Panc1 (cell line): ENCODE measurements at regions of chr17 and their contacts with region 1.

Region 1: GRCh38 chr17:50626037-50626574 is 8.6 kb upstream of the ABCC3 start:
- DNase-seq: no peak
- ATAC-seq: peak; percentile 82
- H3K4me3 ChIP-seq: no peak overlapping the region
- H3K27ac ChIP-seq: peak overlapping the region; percentile 55
- H3K4me1 ChIP-seq: peaks cover 66% of the 10 kb centered on the region
- H3K27me3 ChIP-seq: no peaks in the 10 kb centered on the region
- CTCF ChIP-seq: peak; percentile 92

Region 2: GRCh38 chr17:50535407-50535806 is 90.7 kb before region 1 on chr17:
- CTCF ChIA-PET with region 1: no interaction called
- POLR2A ChIA-PET with region 1: no interaction called
- in situ Hi-C with region 1: no loop called
- intact Hi-C with region 1: no loop called
- DNase-seq: no peak
- ATAC-seq: no peak
- H3K4me3 ChIP-seq: no peak overlapping the region
- H3K27ac ChIP-seq: no peak overlapping the region
- H3K4me1 ChIP-seq: peaks cover 41% of the 10 kb centered on the region
- H3K27me3 ChIP-seq: no peaks in the 10 kb centered on the region
- CTCF ChIP-seq: no peak

Region 3: DNA sequence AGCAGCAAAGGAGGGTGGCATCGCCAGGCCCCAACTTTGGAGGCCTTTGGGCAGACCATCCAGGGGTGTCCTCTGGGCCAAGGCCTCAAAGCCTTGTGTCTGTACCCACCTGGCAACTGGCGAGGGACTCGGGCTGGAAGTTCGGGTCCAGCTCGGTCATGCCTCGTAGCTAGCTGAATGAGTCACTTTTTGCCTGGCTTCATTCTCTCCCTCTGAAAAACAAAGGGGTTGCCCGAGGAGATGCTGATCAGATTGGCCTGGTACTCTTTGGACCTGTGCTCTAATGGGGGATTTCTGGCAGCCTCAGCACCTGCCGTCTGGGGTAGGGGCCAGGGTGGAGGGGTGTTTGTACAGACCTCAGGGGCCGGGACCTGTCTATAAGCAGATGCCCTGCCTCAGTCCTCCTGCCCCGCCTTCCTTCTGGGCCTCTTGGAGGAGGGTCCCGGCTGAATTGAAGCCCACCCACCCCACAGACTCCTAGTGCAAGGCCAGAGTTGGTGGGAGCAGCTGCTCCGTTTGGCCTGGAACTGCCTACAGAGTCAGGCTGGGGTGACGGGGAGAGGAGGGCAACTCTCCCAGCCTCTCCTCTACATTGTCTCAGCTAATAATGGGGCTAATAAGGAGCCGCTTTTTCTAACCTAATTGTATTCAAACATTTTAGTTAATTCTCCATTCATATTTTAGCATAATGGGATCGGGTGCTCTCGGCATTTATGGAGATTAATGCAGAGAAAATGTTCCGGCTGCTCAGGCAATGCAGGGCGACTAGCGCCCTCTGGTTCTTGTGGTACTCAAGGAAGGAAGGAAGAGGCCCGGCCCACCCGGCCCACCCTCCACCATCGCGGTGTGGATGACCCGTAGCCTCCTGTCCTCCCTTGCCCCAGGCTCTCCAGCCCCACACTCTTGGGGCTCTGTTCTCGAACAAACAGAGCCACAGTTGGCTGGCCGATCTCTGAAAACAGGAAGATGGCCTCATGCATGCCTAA is 12.8 kb before region 1 on chr17:
- CTCF ChIA-PET with region 1: interaction called, 14 read pairs
- POLR2A ChIA-PET with region 1: no interaction called
- in situ Hi-C with region 1: no loop called
- intact Hi-C with region 1: no loop called
- DNase-seq: no peak
- ATAC-seq: no peak
- H3K4me3 ChIP-seq: no peak overlapping the region
- H3K27ac ChIP-seq: no peak overlapping the region
- H3K4me1 ChIP-seq: no peaks in the 10 kb centered on the region
- H3K27me3 ChIP-seq: no peaks in the 10 kb centered on the region
- CTCF ChIP-seq: no peak

Region 4: DNA sequence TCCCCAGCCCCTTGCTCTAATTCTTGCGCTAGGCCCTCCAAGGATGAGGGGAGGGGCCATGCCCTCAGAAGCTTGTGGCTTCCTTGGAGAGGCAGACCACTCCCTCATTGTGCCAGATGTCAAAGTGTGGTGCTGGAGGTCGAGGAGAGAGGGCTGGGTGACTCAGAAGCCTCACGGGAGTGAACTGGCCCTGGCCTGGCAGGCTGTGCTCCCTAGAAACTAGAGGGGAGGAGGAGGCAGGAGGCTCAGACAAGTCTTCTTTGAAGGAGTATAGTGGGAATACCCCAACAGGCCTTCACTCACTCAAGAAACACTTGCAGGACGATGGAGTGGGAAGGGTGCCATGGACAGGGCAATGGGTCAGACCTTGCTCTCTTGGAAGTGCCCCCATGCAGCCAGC is 63.1 kb after region 1 on chr17:
- CTCF ChIA-PET with region 1: interaction called, 16 read pairs
- POLR2A ChIA-PET with region 1: interaction called, 4 read pairs
- in situ Hi-C with region 1: no loop called
- intact Hi-C with region 1: loop called (anchors 2 kb)
- DNase-seq: no peak
- ATAC-seq: peak; percentile 16; the same call in 1 of the 2 replicates
- H3K4me3 ChIP-seq: no peak overlapping the region
- H3K27ac ChIP-seq: peak overlapping the region; percentile 29
- H3K4me1 ChIP-seq: peaks cover 83% of the 10 kb centered on the region
- H3K27me3 ChIP-seq: no peaks in the 10 kb centered on the region
- CTCF ChIP-seq: no peak

Region 5: DNA sequence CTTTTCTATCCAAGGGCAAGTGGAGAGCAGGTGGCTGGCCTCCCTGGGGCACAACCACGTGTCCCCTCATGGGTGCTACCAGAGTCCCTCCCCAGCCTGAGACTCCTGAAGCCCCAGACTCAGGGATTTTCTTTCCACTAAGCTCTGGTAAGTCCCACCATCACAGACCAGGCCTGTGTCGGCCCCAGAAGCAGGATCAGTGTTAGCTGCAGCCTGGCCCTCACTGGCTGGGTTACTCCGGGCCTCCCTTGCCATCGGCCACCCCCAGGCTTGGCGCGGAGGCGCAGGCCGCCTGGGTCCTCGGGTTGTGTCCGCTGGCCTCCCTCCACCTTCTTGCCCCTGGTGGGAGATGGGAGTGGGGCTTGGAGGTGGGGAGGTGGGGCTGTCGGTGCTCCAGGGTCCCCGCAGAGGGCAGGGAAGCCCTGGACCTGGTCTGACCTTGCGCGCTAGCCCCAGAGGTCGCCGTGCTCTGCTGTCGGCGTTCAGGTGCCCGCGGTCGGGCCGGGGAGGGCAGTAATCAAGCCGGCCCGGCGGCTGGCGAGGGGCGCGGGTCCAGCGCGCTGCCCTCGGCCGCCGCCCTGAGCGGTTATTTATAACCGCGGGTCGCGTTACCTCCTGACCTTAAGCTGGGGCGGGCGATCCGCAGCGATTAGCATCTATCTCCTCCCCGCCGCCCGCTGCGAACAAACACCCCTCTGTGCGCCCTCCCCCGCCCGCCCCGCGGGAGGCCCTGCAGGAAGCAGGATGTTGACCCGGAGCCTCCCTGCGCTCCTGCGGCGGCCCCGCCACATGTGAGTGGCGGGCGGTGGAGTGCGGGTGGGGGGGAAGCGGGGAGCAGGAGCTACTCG is 318.2 kb after region 1 on chr17:
- CTCF ChIA-PET with region 1: interaction called, 10 read pairs
- POLR2A ChIA-PET with region 1: no interaction called
- in situ Hi-C with region 1: no loop called
- intact Hi-C with region 1: no loop called
- DNase-seq: no peak
- ATAC-seq: peak; percentile 81
- H3K4me3 ChIP-seq: peak overlapping the region; percentile 31 to 42
- H3K27ac ChIP-seq: peak overlapping the region; percentile 87
- H3K4me1 ChIP-seq: peaks cover 49% of the 10 kb centered on the region
- H3K27me3 ChIP-seq: no peaks in the 10 kb centered on the region
- CTCF ChIP-seq: no peak